HepG2 (cell line): ENCODE measurements at regions of chr12 and their contacts with region 1.

Region 1: DNA sequence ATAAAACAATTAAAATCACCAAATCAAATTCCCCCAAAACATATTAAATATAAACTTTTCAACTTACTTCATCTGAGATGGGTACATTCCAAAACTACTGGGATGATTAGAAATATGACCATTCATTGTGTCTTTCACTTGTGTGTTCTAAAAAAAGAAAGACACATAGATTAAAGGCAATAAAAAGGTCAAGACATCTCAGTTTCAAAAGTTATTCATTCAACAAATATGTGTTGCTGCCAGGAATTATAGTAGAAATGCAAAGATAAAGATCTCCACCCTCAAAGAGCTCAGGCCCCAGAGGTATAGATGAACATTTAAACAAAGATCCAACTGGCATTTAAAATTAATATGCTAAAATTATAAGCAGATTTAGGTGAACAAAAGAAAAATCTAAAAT is 106.4 kb downstream of the EPS8 start:
- DNase-seq: no peak
- ATAC-seq: no peak
- H3K4me3 ChIP-seq: no peak overlapping the region
- H3K27ac ChIP-seq: no peak overlapping the region
- H3K4me1 ChIP-seq: peaks cover 20% of the 10 kb centered on the region
- H3K27me3 ChIP-seq: no peaks in the 10 kb centered on the region; a peak in 1 of 5 replicates
- CTCF ChIP-seq: no peak
- EP300 ChIP-seq: no peak
- POLR2A ChIP-seq: no peak
- RAD21 ChIP-seq: no peak

Region 2: DNA sequence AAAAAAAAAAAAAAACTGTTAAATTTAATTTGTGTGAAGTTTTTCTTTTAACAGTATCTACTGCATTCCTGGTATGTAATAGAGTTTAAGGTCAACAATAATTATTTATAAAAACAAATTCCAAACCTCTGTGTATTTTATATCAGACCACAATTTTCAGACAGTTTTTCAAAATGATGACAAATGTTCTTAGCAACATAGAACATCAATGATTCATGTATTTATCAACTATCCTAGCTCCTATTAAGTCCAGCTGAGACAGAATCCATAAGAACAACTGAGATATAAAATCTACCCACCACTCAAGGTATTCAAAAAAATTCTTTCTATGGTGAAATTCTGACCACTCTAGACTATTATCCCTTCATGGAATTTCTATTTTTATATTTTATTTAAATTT is 38.1 kb before region 1 on chr12:
- CTCF ChIA-PET with region 1: no interaction called
- POLR2A ChIA-PET with region 1: no interaction called
- in situ Hi-C with region 1: no loop called
- intact Hi-C with region 1: loop called (anchors 5 kb)
- DNase-seq: no peak
- ATAC-seq: no peak
- H3K4me3 ChIP-seq: no peak overlapping the region
- H3K27ac ChIP-seq: no peak overlapping the region
- H3K4me1 ChIP-seq: no peaks in the 10 kb centered on the region
- H3K27me3 ChIP-seq: no peaks in the 10 kb centered on the region
- CTCF ChIP-seq: no peak
- EP300 ChIP-seq: no peak
- POLR2A ChIP-seq: no peak
- RAD21 ChIP-seq: no peak

Region 3: GRCh38 chr12:15700595-15700994 is 17.8 kb after region 1 on chr12:
- CTCF ChIA-PET with region 1: no interaction called
- POLR2A ChIA-PET with region 1: no interaction called
- in situ Hi-C with region 1: no loop called
- intact Hi-C with region 1: no loop called
- DNase-seq: no peak
- ATAC-seq: no peak
- H3K4me3 ChIP-seq: no peak overlapping the region
- H3K27ac ChIP-seq: no peak overlapping the region
- H3K4me1 ChIP-seq: peaks cover 18% of the 10 kb centered on the region
- H3K27me3 ChIP-seq: no peaks in the 10 kb centered on the region
- CTCF ChIP-seq: no peak
- EP300 ChIP-seq: no peak
- POLR2A ChIP-seq: no peak
- RAD21 ChIP-seq: no peak